ENCODE measurements at regions of chr3 and their contacts with region 1.

Region 1: GRCh38 chr3:129934234-129935123 is 40.0 kb upstream of the TRH start:
- DNase-seq: no peak
- H3K4me3 ChIP-seq: peak overlapping the region; percentile 46
- H3K27ac ChIP-seq: no peak overlapping the region
- H3K4me1 ChIP-seq: no peaks in the 10 kb centered on the region
- H3K27me3 ChIP-seq: no peaks in the 10 kb centered on the region
- CTCF ChIP-seq: peak; percentile 94

Region 2: GRCh38 chr3:129650256-129650872 is 284.1 kb before region 1 on chr3:
- intact Hi-C with region 1: loop called (anchors 10 kb)
- DNase-seq: peak; percentile 47
- H3K4me3 ChIP-seq: no peak overlapping the region
- H3K27ac ChIP-seq: no peak overlapping the region
- H3K4me1 ChIP-seq: peaks cover 27% of the 10 kb centered on the region
- H3K27me3 ChIP-seq: no peaks in the 10 kb centered on the region
- CTCF ChIP-seq: peak; percentile 79

Region 3: GRCh38 chr3:129756871-129757270 is 177.6 kb before region 1 on chr3:
- intact Hi-C with region 1: no loop called
- DNase-seq: no peak
- H3K4me3 ChIP-seq: no peak overlapping the region
- H3K27ac ChIP-seq: no peak overlapping the region
- H3K4me1 ChIP-seq: peaks cover 6% of the 10 kb centered on the region
- H3K27me3 ChIP-seq: no peaks in the 10 kb centered on the region
- CTCF ChIP-seq: no peak

Measured in left ventricle myocardium inferior (tissue), 1 donor.